ENCODE measurements at regions of chr3 and their contacts with region 1.

Region 1: DNA sequence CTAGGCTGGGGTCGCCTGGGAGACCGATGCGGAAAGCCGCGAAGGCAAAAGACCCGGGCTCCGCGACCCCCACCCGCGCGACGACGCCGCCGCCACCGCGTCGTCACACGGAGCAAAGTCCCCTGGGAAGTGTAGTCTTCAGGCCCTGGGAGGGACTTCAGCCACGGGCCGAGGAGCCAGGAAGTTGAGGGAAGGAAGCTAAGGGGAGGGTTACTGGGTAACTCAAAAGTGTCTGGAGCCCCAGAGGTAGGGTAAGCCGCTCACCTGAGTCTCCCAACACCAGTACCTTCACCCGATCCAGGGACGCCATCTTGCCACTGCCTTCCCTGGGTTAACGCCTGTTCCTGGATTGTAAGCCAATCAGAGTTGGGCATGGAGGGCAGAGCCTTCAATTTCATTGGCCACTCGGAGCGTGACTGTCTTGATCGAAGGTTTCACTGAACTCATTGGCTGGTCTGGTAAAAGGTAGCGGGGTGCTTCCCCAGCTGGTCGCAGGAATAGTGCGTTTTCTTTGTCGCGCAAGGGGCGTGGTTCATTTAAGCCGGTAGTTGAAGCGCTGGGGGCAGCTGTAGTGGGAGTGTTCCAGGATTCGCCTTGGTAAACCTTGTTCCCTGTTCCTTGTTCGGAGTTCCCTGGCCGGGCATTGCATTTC is at the starts of genes GTF2E1 and RABL3:
- DNase-seq: peak; percentile 99
- H3K4me3 ChIP-seq: peak within 1 kb of the TSS; percentile 76 to 90
- H3K27ac ChIP-seq: peak within 1 kb of the TSS; percentile 97
- H3K4me1 ChIP-seq: peaks cover 4% of the 10 kb centered on the region
- H3K27me3 ChIP-seq: no peaks in the 10 kb centered on the region
- CTCF ChIP-seq: peak in 2 of 4 experiments; percentile 16 to 22
- POLR2A ChIP-seq: peak; percentile 33
- total RNA-seq, gene GTF2E1: 15.3 to 17.5 TPM
- total RNA-seq, gene RABL3: 13.5 to 24.2 TPM

Region 2: DNA sequence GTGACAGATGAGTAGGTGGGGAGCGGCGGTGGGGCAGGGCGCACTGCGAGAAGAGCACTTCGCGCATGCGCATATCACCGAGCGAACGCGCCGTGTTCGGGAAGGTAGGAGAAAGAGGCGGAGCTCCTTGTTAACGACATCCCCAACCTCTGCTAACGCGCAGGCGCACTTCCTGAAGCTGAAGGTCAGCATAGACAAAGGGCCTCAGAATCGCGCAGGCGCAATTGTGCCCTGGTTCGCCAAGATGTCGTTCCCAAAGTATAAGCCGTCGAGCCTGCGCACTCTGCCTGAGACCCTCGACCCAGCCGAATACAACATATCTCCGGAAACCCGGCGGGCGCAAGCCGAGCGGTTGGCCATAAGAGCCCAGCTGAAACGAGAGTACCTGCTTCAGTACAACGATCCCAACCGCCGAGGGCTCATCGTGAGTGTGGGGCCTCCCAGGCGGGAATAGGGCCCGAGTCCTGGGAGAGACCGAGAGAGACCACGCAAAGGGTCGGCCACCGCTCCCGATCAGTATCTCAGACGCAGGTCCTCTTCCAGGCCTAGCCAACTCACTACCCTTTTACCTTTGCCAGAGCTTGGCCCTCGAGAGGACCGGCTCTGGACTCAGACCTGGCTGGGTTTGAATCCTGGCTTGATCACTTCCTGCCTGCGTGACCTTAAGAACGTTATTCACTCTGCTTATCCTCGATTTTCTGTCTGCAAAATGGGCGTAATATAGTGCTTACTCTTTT is 146.0 kb before region 1 on chr3 and contains the start of gene NDUFB4:
- intact Hi-C with region 1: loop called (anchors 10 kb)
- DNase-seq: peak; percentile 96
- H3K4me3 ChIP-seq: peak within 1 kb of the TSS; percentile 63 to 69
- H3K27ac ChIP-seq: peak within 1 kb of the TSS; percentile 82 to 86
- H3K4me1 ChIP-seq: no peaks in the 10 kb centered on the region
- H3K27me3 ChIP-seq: no peaks in the 10 kb centered on the region
- CTCF ChIP-seq: no peak
- POLR2A ChIP-seq: peak; percentile 86
- total RNA-seq, gene NDUFB4: 83.3 to 159 TPM

Region 3: DNA sequence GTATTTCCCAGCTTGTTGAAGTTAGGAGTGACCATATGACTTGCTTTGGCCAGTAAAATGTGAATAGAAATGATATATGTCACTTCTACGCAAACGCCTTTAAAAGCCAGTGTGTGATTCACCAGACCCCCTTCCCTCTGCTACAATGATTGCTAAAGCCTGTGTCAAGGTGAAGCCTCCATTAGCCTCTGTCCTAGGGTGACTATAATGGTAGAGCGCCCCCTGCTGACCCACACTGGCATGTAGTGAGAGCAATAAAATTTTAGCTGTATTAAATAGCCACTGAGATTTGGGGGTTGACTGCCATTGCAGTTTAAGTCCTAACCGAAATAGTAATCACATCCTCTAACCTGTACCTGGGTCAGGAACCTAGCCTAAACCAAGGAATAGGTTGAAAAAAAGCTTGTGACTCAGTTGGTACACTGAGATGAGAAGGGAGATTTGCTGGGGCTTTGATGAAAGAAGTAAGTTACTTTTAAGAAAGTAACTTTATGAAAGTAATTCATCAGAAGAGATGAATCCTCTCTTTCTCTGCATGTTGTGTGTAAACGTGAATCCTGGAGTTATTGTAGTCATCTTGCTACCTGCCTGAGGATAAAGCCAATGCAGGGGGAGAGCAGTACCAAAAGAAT is 52.8 kb after region 1 on chr3:
- intact Hi-C with region 1: no loop called
- DNase-seq: peak; percentile 67
- H3K4me3 ChIP-seq: no peak overlapping the region
- H3K27ac ChIP-seq: no peak overlapping the region
- H3K4me1 ChIP-seq: no peaks in the 10 kb centered on the region
- H3K27me3 ChIP-seq: no peaks in the 10 kb centered on the region
- CTCF ChIP-seq: peak; percentile 43 to 75 (median 72)
- POLR2A ChIP-seq: no peak

Region 4: DNA sequence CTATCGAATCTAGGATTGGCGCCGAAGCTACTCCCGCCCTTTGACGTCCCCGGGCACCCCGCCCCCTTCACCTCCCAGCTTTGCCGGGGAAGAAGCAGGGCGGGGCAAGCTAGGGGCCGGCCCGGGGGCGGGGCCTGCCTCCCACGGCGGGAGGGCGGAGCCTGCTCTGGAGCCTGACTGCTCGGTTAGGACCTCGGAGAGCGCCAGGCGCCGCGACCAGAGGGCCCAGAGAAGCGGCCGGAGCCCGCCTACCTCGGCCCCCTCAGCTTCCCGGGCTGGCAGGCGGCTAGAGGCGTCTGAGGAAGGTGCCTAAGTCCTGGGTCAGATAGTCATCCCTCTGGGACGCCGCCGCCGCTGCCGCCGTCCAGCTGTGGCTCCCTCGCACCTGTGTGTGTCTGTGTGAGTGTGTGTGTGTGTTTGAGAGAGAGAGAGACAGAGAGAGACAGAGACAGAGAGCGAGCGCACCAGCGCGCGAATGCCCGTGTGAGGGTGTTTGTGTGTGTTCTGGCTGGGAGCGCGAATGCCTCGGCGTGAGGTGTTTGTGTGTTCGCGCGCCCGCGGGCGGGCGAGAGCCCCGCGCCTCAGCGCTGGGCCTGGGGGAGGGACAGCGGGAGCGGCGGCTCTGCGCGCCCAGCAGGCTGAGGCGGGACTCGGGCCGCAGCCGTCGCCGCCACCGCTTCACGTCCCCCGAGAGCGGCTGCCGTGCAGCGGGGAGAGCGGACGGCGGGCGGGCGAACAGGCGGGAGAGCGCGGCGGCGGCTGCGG is 165.9 kb after region 1 on chr3 and contains the start of gene STXBP5L:
- intact Hi-C with region 1: loop called (anchors 5 kb)
- DNase-seq: peak; percentile 86
- H3K4me3 ChIP-seq: peak within 1 kb of the TSS; percentile 41 to 42
- H3K27ac ChIP-seq: peak within 1 kb of the TSS; percentile 58 to 63
- H3K4me1 ChIP-seq: no peaks in the 10 kb centered on the region
- H3K27me3 ChIP-seq: no peaks in the 10 kb centered on the region
- CTCF ChIP-seq: no peak
- POLR2A ChIP-seq: peak; percentile 79
- total RNA-seq, gene STXBP5L: 2.6 to 4.8 TPM

Measured in prostate gland (tissue), 2 donors.